Vagina (tissue), 2 donors: ENCODE measurements at regions of chr14 and their contacts with region 1.

Region 1: DNA sequence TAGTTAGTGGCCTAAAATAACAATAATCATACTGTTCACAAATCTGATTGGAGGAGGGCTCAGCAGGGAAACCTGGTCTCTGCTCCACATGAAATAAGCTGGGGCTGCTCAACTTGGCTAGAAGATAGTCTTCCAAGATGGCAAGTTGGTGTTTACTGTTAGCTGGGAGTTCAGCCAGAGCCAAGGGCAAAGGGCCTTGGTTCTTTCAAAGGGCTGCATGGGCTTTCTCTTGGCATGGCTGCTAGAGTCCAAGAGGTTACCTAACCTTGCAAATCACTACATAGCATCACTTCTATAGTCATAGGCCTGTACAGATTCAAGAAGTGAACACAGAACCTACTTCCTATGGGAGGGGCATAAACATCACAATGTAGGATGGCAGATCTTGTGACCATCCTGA is 7.1 kb downstream of the EXOC5 start:
- DNase-seq: no peak
- H3K4me3 ChIP-seq: no peak overlapping the region
- H3K27ac ChIP-seq: no peak overlapping the region
- H3K4me1 ChIP-seq: peaks cover 15% of the 10 kb centered on the region
- H3K27me3 ChIP-seq: no peaks in the 10 kb centered on the region
- CTCF ChIP-seq: no peak
- POLR2A ChIP-seq: no peak

Region 2: GRCh38 chr14:57244106-57244505 is 17.5 kb before region 1 on chr14:
- intact Hi-C with region 1: no loop called
- DNase-seq: no peak
- H3K4me3 ChIP-seq: no peak overlapping the region
- H3K27ac ChIP-seq: no peak overlapping the region
- H3K4me1 ChIP-seq: no peaks in the 10 kb centered on the region
- H3K27me3 ChIP-seq: no peaks in the 10 kb centered on the region
- CTCF ChIP-seq: no peak
- POLR2A ChIP-seq: no peak

Region 3: DNA sequence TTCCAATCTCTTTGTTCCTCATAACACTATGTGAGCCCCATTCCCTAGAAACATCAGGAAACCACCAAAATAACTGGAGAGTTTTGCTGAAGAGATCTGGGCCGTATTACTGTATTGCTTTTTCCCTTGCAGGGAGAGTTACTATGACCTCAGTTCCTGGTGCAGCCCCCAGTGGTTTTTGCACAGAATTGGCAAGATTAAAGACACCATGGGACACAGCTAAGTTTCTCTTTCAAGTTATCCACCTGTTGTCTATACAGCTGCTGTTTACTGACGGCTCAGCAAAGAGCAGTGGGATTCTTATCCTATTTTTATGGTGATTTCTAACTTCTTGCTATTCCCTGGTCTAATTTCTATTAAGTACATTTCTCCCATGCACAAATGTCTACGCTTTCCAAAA is 681.4 kb after region 1 on chr14:
- intact Hi-C with region 1: loop called (anchors 5 kb)
- DNase-seq: no peak
- H3K4me3 ChIP-seq: no peak overlapping the region
- H3K27ac ChIP-seq: no peak overlapping the region
- H3K4me1 ChIP-seq: no peaks in the 10 kb centered on the region
- H3K27me3 ChIP-seq: no peaks in the 10 kb centered on the region
- CTCF ChIP-seq: no peak
- POLR2A ChIP-seq: no peak